Heart right ventricle (tissue), 16 donors: ENCODE measurements at regions of chr15 and their contacts with region 1.

Region 1: GRCh38 chr15:62316413-62317060 is 151.5 kb upstream of the C2CD4B start:
- DNase-seq: no peak
- ATAC-seq: no peak
- H3K4me3 ChIP-seq: no peak overlapping the region
- H3K27ac ChIP-seq: no peak overlapping the region
- H3K4me1 ChIP-seq: no peaks in the 10 kb centered on the region
- H3K27me3 ChIP-seq: peaks cover 0 to 5% (median 0%) of the 10 kb centered on the region in 7 donors
- CTCF ChIP-seq: no peak

Region 2: DNA sequence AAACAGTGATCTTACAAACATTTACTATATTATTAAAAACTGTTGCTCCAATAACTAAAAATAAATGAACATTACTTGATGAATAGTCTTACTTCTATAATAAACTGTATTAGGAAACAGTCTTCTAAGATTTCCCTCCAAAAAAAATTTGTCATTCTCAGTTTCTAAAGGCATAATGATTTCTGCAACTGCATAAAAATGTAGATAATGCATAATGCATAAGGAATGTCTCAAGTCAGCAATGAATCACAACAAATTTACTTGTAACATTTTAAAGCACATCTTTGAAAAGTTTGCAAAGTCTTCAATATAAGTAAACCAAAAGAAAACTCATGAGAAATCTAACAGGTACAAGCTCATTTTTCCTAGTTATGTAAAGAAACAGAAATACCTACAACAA is 369.8 kb before region 1 on chr15:
- intact Hi-C with region 1: no loop called
- DNase-seq: no peak
- ATAC-seq: no peak
- H3K4me3 ChIP-seq: no peak overlapping the region
- H3K27ac ChIP-seq: no peak overlapping the region
- H3K4me1 ChIP-seq: peaks cover 0 to 4% (median 0%) of the 10 kb centered on the region in 9 donors
- H3K27me3 ChIP-seq: no peaks in the 10 kb centered on the region
- CTCF ChIP-seq: no peak

Region 3: GRCh38 chr15:62378772-62379498 is 62.4 kb after region 1 on chr15:
- intact Hi-C with region 1: loop called in 1 of 10 experiments (anchors 10 kb)
- DNase-seq: no peak
- ATAC-seq: no peak
- H3K4me3 ChIP-seq: no peak overlapping the region
- H3K27ac ChIP-seq: no peak overlapping the region
- H3K4me1 ChIP-seq: peaks cover 0 to 14% (median 0%) of the 10 kb centered on the region in 9 donors
- H3K27me3 ChIP-seq: peaks cover 0 to 8% (median 0%) of the 10 kb centered on the region in 7 donors
- CTCF ChIP-seq: no peak

Region 4: DNA sequence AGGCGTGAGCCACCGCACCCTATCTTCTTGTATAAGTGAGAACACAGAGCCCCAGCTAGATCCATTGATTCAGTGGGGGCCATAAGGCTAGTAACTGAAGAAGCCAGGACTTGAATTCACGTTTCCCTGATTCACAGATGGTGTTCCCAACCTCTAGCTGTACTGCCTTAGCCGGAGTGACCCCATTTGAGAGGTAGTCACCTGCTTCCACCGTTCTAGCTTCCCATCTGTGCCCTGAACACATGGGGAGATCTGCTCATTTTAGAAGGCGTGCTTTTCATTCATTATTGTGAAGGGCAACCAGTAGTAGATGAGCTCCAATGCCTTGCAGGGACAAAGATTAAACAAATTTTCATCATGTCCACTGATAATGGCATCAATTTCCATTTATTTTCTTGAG is 360.4 kb after region 1 on chr15:
- intact Hi-C with region 1: loop called in 1 of 10 experiments (anchors 5 kb)
- DNase-seq: no peak
- ATAC-seq: no peak
- H3K4me3 ChIP-seq: no peak overlapping the region
- H3K27ac ChIP-seq: no peak overlapping the region
- H3K4me1 ChIP-seq: no peaks in the 10 kb centered on the region
- H3K27me3 ChIP-seq: no peaks in the 10 kb centered on the region
- CTCF ChIP-seq: no peak